Activated CD4-positive, alpha-beta T cell treated with anti-CD3 and anti-CD28 coated beads for 36 hours (primary cell): ENCODE measurements at regions of chr4 and their contacts with region 1.

Region 1: GRCh38 chr4:121112530-121112929 is 40.2 kb upstream of the NDNF start:
- DNase-seq: no peak
- ATAC-seq: no peak
- H3K4me3 Mint-ChIP-seq: no peak overlapping the region
- H3K27ac Mint-ChIP-seq: no peak overlapping the region
- H3K4me1 Mint-ChIP-seq: peaks cover 23% of the 10 kb centered on the region
- H3K27me3 Mint-ChIP-seq: no peaks in the 10 kb centered on the region

Region 2: DNA sequence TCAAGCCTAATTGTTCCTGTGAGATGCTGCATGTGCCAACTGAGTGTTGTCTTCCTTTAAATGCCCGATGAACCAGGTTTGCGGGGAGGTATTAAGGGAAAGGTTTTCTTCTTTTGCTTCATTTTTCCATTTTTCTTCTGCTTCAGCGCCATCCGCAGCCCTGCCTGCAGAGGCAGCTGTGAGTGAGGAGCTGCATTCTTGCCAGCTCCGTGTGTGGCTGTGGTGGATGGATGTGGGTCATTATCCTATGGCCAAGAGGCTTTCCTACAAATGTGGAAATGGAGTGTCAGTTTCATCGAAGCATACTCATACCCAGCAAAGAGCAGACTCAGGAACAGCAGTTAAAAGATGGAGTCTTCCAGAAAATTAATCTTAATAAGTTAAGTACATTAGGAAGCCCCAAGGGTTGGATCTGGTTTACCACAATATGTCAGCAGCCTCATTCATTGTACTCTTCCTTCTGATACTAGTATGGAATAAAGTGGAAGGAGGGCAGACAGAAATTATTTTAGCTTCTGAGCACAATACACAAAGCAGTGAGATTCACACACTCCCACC is 14.0 kb after region 1 on chr4:
- CTCF ChIA-PET with region 1: interaction called, 3 read pairs
- POLR2A ChIA-PET with region 1: no interaction called
- intact Hi-C with region 1: loop called in 1 of 2 experiments (anchors 1 kb)
- DNase-seq: no peak
- ATAC-seq: no peak
- H3K4me3 Mint-ChIP-seq: no peak overlapping the region
- H3K27ac Mint-ChIP-seq: no peak overlapping the region
- H3K4me1 Mint-ChIP-seq: peaks cover 11% of the 10 kb centered on the region
- H3K27me3 Mint-ChIP-seq: no peaks in the 10 kb centered on the region